ENCODE measurements at regions of chr22 and their contacts with region 1.

Region 1: GRCh38 chr22:17112486-17113042 is 8.6 kb downstream of the TMEM121B start:
- DNase-seq: peak; percentile 52
- ATAC-seq: peak; percentile 97
- H3K4me3 ChIP-seq: no peak overlapping the region
- H3K27ac ChIP-seq: no peak overlapping the region
- H3K4me1 ChIP-seq: peaks cover 11% of the 10 kb centered on the region
- H3K27me3 ChIP-seq: no peaks in the 10 kb centered on the region
- CTCF ChIP-seq: no peak

Region 2: DNA sequence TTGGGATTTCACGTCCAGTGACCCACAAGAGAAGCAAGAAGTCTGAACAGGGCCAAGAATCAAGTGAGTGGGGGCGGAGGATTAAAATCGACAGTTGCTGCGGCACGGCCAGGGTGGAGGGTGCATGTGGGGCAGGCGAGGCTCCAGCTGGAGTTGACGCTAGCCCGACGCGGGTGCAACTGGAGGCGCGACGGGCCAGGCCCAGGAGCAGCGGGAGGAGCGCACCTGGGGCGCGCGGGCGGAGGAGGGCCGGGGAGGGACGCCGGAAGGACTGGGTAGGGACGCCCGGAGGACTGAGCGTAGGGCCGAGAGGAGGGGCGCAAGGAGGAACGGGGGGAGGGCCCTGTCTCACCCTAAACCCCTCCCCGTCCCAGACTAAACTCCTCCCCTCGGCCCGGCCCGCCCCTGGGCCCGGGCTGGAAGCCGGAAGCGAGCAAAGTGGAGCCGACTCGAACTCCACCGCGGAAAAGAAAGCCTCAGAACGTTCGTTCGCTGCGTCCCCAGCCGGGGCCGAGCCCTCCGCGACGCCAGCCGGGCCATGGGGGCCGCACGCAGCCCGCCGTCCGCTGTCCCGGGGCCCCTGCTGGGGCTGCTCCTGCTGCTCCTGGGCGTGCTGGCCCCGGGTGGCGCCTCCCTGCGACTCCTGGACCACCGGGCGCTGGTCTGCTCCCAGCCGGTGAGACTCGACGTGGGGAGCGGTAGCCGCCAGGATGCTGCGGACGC is 27.8 kb before region 1 on chr22 and contains the start of gene IL17RA:
- CTCF ChIA-PET with region 1: no interaction called
- POLR2A ChIA-PET with region 1: no interaction called
- intact Hi-C with region 1: loop called (anchors 1 kb)
- DNase-seq: peak; percentile 83
- ATAC-seq: peak; percentile 98
- H3K4me3 ChIP-seq: peak within 1 kb of the TSS; percentile 85
- H3K27ac ChIP-seq: no peak within 1 kb of the TSS
- H3K4me1 ChIP-seq: peaks cover 11% of the 10 kb centered on the region; the same call in 1 of the 2 replicates
- H3K27me3 ChIP-seq: no peaks in the 10 kb centered on the region
- CTCF ChIP-seq: no peak
- total RNA-seq, gene IL17RA: 5.9 and 8.9 TPM in 2 replicates

Region 3: DNA sequence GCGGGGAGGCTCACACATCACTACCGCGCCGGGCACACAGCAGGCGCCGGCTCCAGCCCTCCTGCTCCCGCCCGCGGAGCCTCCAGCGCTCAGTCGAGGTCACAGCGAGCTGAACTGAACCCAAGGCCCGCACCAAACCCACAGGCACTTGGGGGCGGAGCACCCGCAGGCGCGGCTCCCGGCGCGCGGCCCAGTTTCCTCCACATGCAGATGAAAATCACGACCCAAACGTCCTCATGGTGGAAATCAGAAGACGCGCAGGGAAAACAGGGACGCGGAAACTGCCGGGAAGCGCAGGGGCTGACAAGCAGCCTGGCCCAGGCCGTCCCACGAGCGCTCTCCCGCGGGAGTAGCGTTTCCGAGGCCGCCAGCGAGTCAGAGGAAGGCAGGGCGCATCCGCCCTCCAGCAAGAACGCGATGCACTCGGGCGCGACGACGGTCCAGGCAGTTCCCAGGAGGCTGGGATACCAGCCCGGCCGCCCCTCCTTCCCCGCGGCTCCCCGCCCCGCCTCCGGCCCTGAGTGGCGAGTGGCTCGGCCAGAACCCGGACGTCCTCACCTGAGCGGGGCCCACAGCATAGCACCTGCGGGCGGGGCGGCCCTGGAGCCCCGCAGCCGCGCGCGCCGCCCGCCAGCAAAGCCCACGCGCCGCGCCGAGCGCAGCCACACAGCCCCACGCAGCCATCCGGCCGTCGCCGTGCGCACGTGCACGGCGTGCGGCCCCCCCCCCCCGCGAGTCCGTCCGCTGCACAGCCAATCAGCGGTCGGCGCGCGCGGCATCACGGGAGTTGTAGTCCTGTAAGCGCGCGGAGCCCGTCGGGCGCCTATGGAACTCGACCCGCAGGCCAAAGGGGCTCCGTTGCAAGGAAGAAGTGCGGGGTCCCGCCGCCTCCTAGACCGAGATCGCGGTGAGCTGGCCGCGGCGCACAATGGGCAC is 46.3 kb after region 1 on chr22 and contains the start of gene HDHD5:
- CTCF ChIA-PET with region 1: interaction called, 3 read pairs
- POLR2A ChIA-PET with region 1: no interaction called
- intact Hi-C with region 1: loop called (anchors 1 kb)
- DNase-seq: peak; percentile 75
- ATAC-seq: peak; percentile 84
- H3K4me3 ChIP-seq: peak within 1 kb of the TSS; percentile 83
- H3K27ac ChIP-seq: peak within 1 kb of the TSS; percentile 51
- H3K4me1 ChIP-seq: peaks cover 16% of the 10 kb centered on the region
- H3K27me3 ChIP-seq: no peaks in the 10 kb centered on the region
- CTCF ChIP-seq: no peak
- total RNA-seq, gene HDHD5: 57.3 and 62.9 TPM in 2 replicates